Activated T-helper 1 cell treated with anti-CD3 and anti-CD28 coated beads, Interleukin-12 subunit alpha, Interleukin-12 subunit beta, Interleukin-2, Interleukin-4 antibody, amounts not matched to agents 30 ng/mL and 10 ng/mL and 1 ng/mL, durations not matched to agents 14 hours and 24 hours and 36 hours (primary cell): ENCODE measurements at regions of chr1 and their contacts with region 1.

Region 1: GRCh38 chr1:206461602-206462455 is 8.4 kb upstream of the IKBKE start:
- DNase-seq: peak; percentile 65
- H3K4me3 Mint-ChIP-seq: no peak overlapping the region
- H3K27ac Mint-ChIP-seq: no peak overlapping the region
- H3K4me1 Mint-ChIP-seq: peaks cover 53% of the 10 kb centered on the region
- H3K27me3 Mint-ChIP-seq: no peaks in the 10 kb centered on the region

Region 2: DNA sequence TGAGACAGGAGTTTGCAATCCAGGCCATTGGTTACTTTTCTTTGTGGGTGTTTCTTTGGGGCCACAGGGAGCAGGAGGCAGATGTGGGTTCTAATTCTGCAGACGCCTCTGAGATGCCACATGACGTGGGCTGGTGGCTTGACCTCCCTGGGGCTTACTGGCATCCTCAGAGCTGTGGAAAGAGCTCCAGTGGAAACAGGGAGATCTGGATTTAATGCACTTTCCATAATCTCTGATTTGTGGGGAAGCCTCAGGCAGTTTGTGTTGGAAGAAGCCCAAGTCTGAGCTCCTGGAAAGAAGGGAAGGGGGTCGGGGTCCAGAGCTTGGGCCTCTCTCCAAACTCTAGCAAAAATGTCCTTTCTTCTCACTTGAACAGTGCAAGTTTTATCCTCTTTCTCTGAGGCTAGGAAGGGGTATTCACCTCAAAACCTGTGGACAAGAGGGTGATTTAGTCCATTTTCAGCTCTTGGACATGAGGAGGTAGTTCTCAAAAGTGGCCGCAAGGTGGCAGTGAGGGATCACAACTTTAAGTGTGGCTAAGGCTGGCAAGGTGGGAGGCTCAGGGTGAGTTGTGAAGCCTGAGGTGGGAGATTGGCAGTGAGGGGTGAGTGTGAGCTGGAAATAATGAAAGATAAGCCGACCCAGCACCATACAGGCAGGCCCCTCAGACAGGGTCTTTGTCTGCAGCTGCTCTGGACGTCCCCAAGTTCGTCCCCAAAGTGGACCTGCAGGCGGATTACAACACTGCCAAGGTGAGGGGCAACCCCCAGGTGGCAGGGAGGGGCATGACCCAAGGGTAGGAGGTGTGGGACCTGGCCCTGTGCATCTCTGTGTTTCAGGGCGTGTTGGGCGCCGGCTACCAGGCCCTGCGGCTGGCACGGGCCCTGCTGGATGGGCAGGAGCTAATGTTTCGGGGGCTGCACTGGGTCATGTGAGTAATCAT is 17.6 kb after region 1 on chr1:
- intact Hi-C with region 1: loop called (anchors 1 kb)
- DNase-seq: peak; percentile 25
- H3K4me3 Mint-ChIP-seq: no peak overlapping the region
- H3K27ac Mint-ChIP-seq: peak overlapping the region; percentile 85
- H3K4me1 Mint-ChIP-seq: peaks cover 31% of the 10 kb centered on the region
- H3K27me3 Mint-ChIP-seq: no peaks in the 10 kb centered on the region

Region 3: DNA sequence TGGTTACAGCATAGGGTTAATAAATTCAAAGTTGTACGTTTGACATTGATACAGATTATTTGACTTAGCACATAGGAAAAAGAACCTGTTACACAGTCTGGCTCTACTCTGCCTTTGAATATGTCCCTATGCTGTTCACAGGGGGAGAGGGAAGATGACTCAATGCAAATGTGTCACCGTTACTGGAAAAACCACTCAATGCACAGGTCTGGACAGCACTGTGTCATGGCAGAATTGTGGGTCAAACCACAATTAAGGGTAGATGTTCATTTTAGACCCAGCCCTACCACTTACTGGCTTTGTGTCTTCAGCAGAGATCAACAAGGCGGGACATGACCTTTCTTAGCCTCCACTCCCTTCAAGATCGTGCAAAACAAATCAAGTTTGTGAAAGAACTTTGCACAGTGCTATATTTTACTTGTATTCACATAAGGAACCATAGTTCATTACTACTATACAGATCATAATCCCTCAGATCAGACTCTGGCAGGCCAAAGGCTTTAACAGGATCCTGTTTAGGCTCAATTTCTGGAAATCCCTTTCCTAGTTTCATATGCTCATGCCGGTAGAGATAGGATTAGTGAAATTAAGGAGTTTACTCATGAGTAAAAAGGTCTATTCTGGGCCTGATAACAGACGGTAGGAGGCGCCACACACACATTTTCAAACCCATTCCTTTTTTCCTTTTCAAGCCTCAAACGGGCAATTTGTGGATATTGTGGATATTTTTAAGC is 128.4 kb after region 1 on chr1:
- intact Hi-C with region 1: no loop called
- DNase-seq: peak; percentile 70
- H3K4me3 Mint-ChIP-seq: peak overlapping the region; percentile 65
- H3K27ac Mint-ChIP-seq: peak overlapping the region; percentile 95
- H3K4me1 Mint-ChIP-seq: peaks cover 87% of the 10 kb centered on the region
- H3K27me3 Mint-ChIP-seq: no peaks in the 10 kb centered on the region

Region 4: GRCh38 chr1:208007938-208008342 is 1546.1 kb after region 1 on chr1:
- intact Hi-C with region 1: no loop called
- DNase-seq: no peak
- H3K4me3 Mint-ChIP-seq: no peak overlapping the region
- H3K27ac Mint-ChIP-seq: no peak overlapping the region
- H3K4me1 Mint-ChIP-seq: no peaks in the 10 kb centered on the region
- H3K27me3 Mint-ChIP-seq: peaks cover 9% of the 10 kb centered on the region